ENCODE measurements at regions of chr17 and their contacts with region 1.

Region 1: DNA sequence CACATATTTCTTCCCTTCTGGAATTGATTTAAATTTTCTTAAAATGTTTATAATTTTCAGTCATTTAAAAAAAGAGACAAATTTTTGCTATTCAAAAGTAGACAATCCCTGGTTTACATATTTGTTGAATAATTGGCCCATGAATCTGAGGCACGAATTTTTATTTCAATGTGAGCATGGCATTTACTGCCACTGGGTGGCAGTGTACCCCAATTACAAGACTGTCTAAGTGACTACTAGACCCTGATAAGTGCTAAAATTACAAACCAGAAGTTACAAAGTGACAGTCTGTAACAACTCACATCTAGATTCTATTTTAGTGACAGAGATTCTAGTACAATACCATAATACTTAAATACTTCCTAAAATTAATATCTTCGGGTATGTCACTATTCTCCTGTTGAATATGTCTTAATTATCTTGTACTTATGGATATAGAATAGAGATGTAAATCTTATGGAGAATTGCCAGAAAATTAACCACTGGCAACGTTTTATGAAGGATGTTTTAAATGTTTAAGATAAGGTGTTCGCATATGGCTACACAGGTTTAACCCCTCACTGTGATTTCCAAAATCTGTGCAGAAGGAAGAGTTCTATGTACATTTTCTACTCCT is 235.8 kb downstream of the MAP2K4 start:
- DNase-seq: peak; percentile 56
- H3K4me3 Mint-ChIP-seq: no peak overlapping the region
- H3K27ac Mint-ChIP-seq: no peak overlapping the region
- H3K4me1 Mint-ChIP-seq: no peaks in the 10 kb centered on the region
- H3K27me3 Mint-ChIP-seq: no peaks in the 10 kb centered on the region
- CTCF ChIP-seq: peak; percentile 76

Region 2: GRCh38 chr17:11779892-11780291 is 476.6 kb before region 1 on chr17:
- CTCF ChIA-PET with region 1: no interaction called
- POLR2A ChIA-PET with region 1: no interaction called
- intact Hi-C with region 1: no loop called
- DNase-seq: no peak
- H3K4me3 Mint-ChIP-seq: no peak overlapping the region
- H3K27ac Mint-ChIP-seq: peak overlapping the region; percentile 73
- H3K4me1 Mint-ChIP-seq: peaks cover 6% of the 10 kb centered on the region
- H3K27me3 Mint-ChIP-seq: no peaks in the 10 kb centered on the region
- CTCF ChIP-seq: no peak

Region 3: GRCh38 chr17:12089809-12090384 is 166.6 kb before region 1 on chr17:
- CTCF ChIA-PET with region 1: no interaction called
- POLR2A ChIA-PET with region 1: no interaction called
- intact Hi-C with region 1: no loop called
- DNase-seq: peak; percentile 60
- H3K4me3 Mint-ChIP-seq: peak overlapping the region; percentile 17
- H3K27ac Mint-ChIP-seq: peak overlapping the region; percentile 87
- H3K4me1 Mint-ChIP-seq: peaks cover 20% of the 10 kb centered on the region
- H3K27me3 Mint-ChIP-seq: no peaks in the 10 kb centered on the region
- CTCF ChIP-seq: no peak

Region 4: GRCh38 chr17:12415031-12415430 is 158.5 kb after region 1 on chr17:
- CTCF ChIA-PET with region 1: no interaction called
- POLR2A ChIA-PET with region 1: no interaction called
- intact Hi-C with region 1: loop called (anchors 10 kb)
- DNase-seq: no peak
- H3K4me3 Mint-ChIP-seq: no peak overlapping the region
- H3K27ac Mint-ChIP-seq: peak overlapping the region; percentile 5
- H3K4me1 Mint-ChIP-seq: no peaks in the 10 kb centered on the region
- H3K27me3 Mint-ChIP-seq: no peaks in the 10 kb centered on the region
- CTCF ChIP-seq: no peak

Region 5: DNA sequence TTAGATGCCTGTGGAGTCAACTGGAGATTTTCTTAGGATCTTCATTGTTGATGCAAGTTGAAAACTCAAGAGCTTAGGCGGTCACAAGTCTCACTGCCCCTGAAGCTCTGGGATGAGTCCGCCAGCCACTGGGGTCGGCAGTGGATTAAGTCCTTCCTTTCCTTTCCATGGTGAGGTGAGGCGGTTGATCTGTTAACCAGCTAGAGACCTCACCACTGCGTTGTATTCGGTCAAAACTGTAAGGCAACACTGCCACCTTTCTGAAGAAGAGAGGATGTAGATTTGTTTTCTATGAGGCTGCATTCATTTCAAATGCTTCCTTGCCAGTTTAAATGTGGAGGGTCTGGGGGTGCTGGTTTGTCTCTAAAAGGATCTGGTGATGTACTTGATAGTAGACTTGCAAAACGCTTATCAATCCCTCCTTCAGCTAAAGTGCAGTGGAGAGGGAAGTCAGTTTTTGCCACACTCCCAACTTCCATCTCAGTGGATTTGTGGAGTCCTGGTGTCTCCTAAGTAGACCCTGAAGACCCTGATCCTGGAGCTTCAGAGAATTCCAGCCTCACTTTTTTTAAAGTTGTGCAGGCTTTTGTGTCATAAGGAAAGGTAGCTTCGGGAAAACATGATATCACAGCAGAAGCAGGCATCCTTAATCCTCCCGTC is 410.9 kb after region 1 on chr17:
- CTCF ChIA-PET with region 1: interaction called, 90 read pairs
- POLR2A ChIA-PET with region 1: no interaction called
- intact Hi-C with region 1: loop called (anchors 1 kb)
- DNase-seq: peak; percentile 51
- H3K4me3 Mint-ChIP-seq: no peak overlapping the region
- H3K27ac Mint-ChIP-seq: no peak overlapping the region
- H3K4me1 Mint-ChIP-seq: no peaks in the 10 kb centered on the region
- H3K27me3 Mint-ChIP-seq: peaks cover 14% of the 10 kb centered on the region
- CTCF ChIP-seq: peak; percentile 30

Region 6: DNA sequence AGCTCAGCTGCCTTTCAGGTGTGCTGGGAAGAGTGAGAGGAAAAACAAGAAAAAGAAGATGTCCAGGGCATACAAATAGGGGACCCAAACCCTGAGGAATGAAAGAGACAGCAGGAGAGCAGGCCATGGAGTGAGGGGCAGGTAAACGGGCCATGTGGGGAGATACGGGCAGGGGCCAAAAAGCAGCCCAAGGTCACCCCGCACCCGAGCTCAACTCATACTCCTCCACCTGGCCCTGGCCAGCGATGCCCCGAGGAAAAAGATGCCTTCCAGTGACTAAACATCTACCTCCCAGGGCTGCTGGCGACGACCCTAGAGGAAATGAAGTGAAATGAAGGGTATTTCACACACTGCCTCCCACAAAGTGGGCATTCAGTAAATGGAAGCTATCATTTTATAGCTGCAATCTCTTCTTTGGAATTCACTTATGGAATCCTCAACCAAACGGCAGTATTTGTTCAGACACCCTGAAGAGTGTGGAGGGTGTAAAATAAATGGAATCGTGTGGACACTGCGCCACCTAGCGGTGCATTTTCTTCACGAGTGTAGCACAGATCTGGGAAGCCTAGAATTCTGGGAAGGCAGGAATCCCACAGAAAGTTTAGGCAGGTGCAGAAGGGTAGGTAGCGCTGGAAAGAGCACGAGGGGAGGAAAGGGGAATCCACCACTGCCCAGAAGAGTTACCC is 746.4 kb after region 1 on chr17:
- CTCF ChIA-PET with region 1: interaction called, 82 read pairs
- POLR2A ChIA-PET with region 1: no interaction called
- intact Hi-C with region 1: loop called (anchors 1 kb)
- DNase-seq: peak; percentile 78
- H3K4me3 Mint-ChIP-seq: no peak overlapping the region
- H3K27ac Mint-ChIP-seq: no peak overlapping the region
- H3K4me1 Mint-ChIP-seq: no peaks in the 10 kb centered on the region
- H3K27me3 Mint-ChIP-seq: no peaks in the 10 kb centered on the region
- CTCF ChIP-seq: peak; percentile 78

Measured in MCF 10A (cell line).